GM12878 (cell line): ENCODE measurements at regions of chr12 and their contacts with region 1.

Region 1: DNA sequence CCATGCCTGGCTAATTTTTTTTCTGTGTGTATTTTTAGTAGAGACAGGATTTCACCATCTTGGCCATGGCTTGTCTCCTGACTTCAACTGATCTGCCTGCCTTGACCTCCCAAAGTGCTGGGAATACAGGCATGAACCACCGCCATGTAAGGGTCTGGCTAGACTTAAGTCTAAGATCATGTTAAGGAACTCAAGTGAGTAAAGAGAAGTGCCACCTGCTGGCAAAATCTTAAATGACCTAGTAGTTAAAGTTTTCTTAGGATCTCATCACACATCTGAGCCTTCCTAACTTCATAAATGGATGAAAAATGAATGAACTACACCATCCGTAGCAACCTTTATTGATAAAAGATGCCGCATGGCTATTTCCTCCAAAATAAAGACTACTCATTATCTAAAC is 1.7 kb upstream of the C12orf56 start:
- DNase-seq: no peak
- ATAC-seq: peak; percentile 76
- H3K4me3 ChIP-seq: no peak overlapping the region
- H3K27ac ChIP-seq: no peak overlapping the region
- H3K4me1 ChIP-seq: no peaks in the 10 kb centered on the region
- H3K27me3 ChIP-seq: no peaks in the 10 kb centered on the region
- CTCF ChIP-seq: peak in 2 of 3 experiments; percentile 28 to 32; a peak in 3 of 6 replicates
- EP300 ChIP-seq: no peak
- POLR2A ChIP-seq: no peak
- RAD21 ChIP-seq: peak; percentile 35; the same call in 1 of the 2 replicates

Region 2: DNA sequence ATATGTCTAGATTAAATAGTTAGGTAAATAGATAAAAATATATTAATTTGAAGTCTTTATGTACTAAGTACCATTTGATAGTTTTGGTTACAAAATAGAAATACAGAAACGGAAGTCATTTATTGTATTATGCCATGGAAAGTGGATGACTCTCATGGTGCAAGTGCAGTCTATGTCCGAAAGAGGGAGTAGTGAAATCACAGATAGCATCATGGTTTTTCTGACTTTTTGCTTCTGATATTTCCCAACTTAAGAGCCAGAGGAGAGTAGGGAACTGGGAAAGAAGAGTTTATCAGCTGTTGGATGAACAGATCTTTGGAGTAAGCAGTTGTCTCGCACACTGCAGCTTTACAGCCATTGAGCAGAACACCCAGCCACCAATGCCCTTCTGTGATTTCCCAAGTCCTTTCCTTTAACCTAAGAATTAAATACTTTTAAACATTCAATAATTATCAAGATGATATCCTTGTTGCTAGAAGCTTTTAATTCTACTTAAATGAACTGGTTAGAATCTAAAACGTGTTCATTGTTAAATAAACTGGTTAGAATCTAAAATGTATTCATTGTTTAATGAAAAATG is 566.1 kb before region 1 on chr12:
- CTCF ChIA-PET with region 1: no interaction called
- POLR2A ChIA-PET with region 1: no interaction called
- RAD21 ChIA-PET with region 1: no interaction called
- SMC1A ChIA-PET with region 1: no interaction called
- in situ Hi-C with region 1: loop called (anchors 25 kb)
- intact Hi-C with region 1: loop called (anchors 5 kb)
- DNase-seq: no peak
- ATAC-seq: peak; percentile 81
- H3K4me3 ChIP-seq: no peak overlapping the region
- H3K27ac ChIP-seq: no peak overlapping the region
- H3K4me1 ChIP-seq: no peaks in the 10 kb centered on the region
- H3K27me3 ChIP-seq: no peaks in the 10 kb centered on the region
- CTCF ChIP-seq: peak; percentile 71 to 77 (median 74)
- EP300 ChIP-seq: no peak
- POLR2A ChIP-seq: no peak
- RAD21 ChIP-seq: peak; percentile 80

Region 3: GRCh38 chr12:64273527-64274403 is 118.5 kb before region 1 on chr12:
- CTCF ChIA-PET with region 1: no interaction called
- POLR2A ChIA-PET with region 1: no interaction called
- RAD21 ChIA-PET with region 1: no interaction called
- SMC1A ChIA-PET with region 1: no interaction called
- in situ Hi-C with region 1: no loop called
- intact Hi-C with region 1: loop called (anchors 5 kb)
- DNase-seq: no peak
- ATAC-seq: peak; percentile 91
- H3K4me3 ChIP-seq: no peak overlapping the region
- H3K27ac ChIP-seq: no peak overlapping the region
- H3K4me1 ChIP-seq: no peaks in the 10 kb centered on the region
- H3K27me3 ChIP-seq: no peaks in the 10 kb centered on the region; a peak in 1 of 4 replicates
- CTCF ChIP-seq: peak; percentile 36 to 64 (median 51); a peak in 4 of 6 replicates
- EP300 ChIP-seq: no peak
- POLR2A ChIP-seq: no peak
- RAD21 ChIP-seq: peak; percentile 79

Region 4: GRCh38 chr12:64293654-64294364 is 98.4 kb before region 1 on chr12:
- CTCF ChIA-PET with region 1: no interaction called
- POLR2A ChIA-PET with region 1: no interaction called
- RAD21 ChIA-PET with region 1: no interaction called
- SMC1A ChIA-PET with region 1: no interaction called
- in situ Hi-C with region 1: no loop called
- intact Hi-C with region 1: no loop called
- DNase-seq: no peak
- ATAC-seq: peak; percentile 65
- H3K4me3 ChIP-seq: no peak overlapping the region
- H3K27ac ChIP-seq: no peak overlapping the region
- H3K4me1 ChIP-seq: peaks cover 13% of the 10 kb centered on the region
- H3K27me3 ChIP-seq: no peaks in the 10 kb centered on the region
- CTCF ChIP-seq: no peak
- EP300 ChIP-seq: no peak
- POLR2A ChIP-seq: no peak
- RAD21 ChIP-seq: no peak

Region 5: GRCh38 chr12:64332938-64333337 is 59.3 kb before region 1 on chr12:
- CTCF ChIA-PET with region 1: no interaction called
- POLR2A ChIA-PET with region 1: no interaction called
- RAD21 ChIA-PET with region 1: no interaction called
- SMC1A ChIA-PET with region 1: no interaction called
- in situ Hi-C with region 1: no loop called
- intact Hi-C with region 1: no loop called
- DNase-seq: no peak
- ATAC-seq: no peak
- H3K4me3 ChIP-seq: no peak overlapping the region
- H3K27ac ChIP-seq: no peak overlapping the region
- H3K4me1 ChIP-seq: no peaks in the 10 kb centered on the region
- H3K27me3 ChIP-seq: no peaks in the 10 kb centered on the region
- CTCF ChIP-seq: no peak
- EP300 ChIP-seq: no peak
- POLR2A ChIP-seq: no peak
- RAD21 ChIP-seq: no peak

Region 6: DNA sequence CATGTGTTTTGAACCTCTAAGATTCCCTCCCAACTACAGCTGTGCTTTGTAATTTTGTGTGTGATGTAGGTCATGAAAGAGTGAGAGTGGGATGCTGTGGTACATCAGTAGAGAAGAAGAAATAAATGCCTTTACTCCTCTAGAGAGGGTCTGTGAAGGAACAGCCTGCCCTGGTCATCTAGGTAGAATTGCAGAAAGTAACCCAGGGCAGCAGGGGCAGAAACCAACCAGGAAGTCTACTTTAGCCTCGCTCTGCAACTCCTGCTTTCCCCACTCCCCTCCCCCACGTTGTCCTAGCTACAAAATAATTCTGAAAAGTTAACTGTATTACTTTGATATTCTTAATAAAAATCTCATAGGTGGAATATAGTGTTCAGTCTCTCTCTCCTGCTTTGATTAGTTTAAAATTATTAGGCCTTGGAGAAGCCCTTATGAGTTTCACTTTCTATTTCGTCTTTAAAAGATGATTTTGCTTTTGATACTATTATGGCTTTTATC is 67.2 kb after region 1 on chr12:
- CTCF ChIA-PET with region 1: no interaction called
- POLR2A ChIA-PET with region 1: no interaction called
- RAD21 ChIA-PET with region 1: no interaction called
- SMC1A ChIA-PET with region 1: no interaction called
- in situ Hi-C with region 1: no loop called
- intact Hi-C with region 1: no loop called
- DNase-seq: no peak
- ATAC-seq: peak; percentile 70
- H3K4me3 ChIP-seq: peak overlapping the region; percentile 62
- H3K27ac ChIP-seq: peak overlapping the region; percentile 79
- H3K4me1 ChIP-seq: peaks cover 13% of the 10 kb centered on the region
- H3K27me3 ChIP-seq: no peaks in the 10 kb centered on the region
- CTCF ChIP-seq: no peak
- EP300 ChIP-seq: no peak
- POLR2A ChIP-seq: no peak
- RAD21 ChIP-seq: no peak

Region 7: GRCh38 chr12:64480148-64480547 is 87.9 kb after region 1 on chr12:
- CTCF ChIA-PET with region 1: no interaction called
- POLR2A ChIA-PET with region 1: no interaction called
- RAD21 ChIA-PET with region 1: no interaction called
- SMC1A ChIA-PET with region 1: no interaction called
- in situ Hi-C with region 1: no loop called
- intact Hi-C with region 1: no loop called
- DNase-seq: no peak
- ATAC-seq: no peak
- H3K4me3 ChIP-seq: no peak overlapping the region
- H3K27ac ChIP-seq: no peak overlapping the region
- H3K4me1 ChIP-seq: no peaks in the 10 kb centered on the region
- H3K27me3 ChIP-seq: no peaks in the 10 kb centered on the region
- CTCF ChIP-seq: no peak
- EP300 ChIP-seq: no peak
- POLR2A ChIP-seq: no peak
- RAD21 ChIP-seq: no peak